Right ventricle myocardium inferior (tissue), 1 donor: ENCODE measurements at regions of chr19 and their contacts with region 1.

Region 1: GRCh38 chr19:3700221-3701032 is at the start of gene PIP5K1C:
- DNase-seq: peak; percentile 96
- ATAC-seq: peak; percentile 95
- total RNA-seq, gene PIP5K1C: 34.7 TPM

Region 2: GRCh38 chr19:3500429-3501130 is 199.8 kb before region 1 on chr19 and contains the start of gene DOHH:
- intact Hi-C with region 1: no loop called
- DNase-seq: peak; percentile 97
- ATAC-seq: peak; percentile 94
- total RNA-seq, gene DOHH: 11.1 TPM

Region 3: DNA sequence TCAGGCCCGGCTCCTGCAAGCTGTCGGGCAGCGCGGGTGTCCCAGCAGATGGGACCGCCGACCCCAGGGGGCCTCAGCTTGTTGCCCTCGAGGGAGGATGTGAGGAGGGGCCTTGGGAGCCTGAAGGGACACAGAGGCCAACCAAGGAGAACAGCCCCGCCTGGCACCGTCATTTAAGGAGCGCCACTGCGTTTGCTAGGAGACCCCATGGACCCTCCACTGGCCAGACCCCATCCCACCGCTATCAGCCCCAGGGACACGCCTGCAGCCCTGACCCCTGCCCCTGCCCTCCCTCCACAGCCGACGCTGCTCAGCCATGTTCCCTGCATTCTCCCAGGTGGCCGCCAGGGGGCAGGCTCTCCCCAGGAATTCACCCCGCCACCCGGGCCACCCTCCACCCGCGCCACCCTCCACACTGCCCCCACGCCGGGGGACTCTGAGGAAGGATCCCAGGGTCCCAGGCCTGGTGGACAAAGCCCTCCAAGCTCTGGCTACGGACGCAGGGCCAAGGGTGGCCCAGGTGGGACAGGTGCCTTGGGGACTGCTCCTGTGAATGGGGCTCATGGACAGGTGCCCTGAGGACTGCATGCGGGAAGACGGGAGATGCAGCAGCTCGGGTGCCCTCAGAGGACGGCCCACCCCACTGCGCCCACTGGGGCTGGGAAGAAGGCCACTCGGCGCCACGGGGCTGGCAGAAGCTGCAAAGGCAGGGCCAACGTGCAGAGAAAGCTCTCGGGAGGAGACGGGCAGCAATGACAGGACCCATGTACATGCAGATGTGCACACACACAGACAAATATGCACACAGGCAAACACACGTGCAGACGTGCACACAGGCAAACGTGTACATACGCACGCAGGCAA is 34.5 kb before region 1 on chr19:
- intact Hi-C with region 1: loop called (anchors 2 kb)
- DNase-seq: peak; percentile 85
- ATAC-seq: peak; percentile 49